Calu3 (cell line): ENCODE measurements at regions of chr19 and their contacts with region 1.

Region 1: DNA sequence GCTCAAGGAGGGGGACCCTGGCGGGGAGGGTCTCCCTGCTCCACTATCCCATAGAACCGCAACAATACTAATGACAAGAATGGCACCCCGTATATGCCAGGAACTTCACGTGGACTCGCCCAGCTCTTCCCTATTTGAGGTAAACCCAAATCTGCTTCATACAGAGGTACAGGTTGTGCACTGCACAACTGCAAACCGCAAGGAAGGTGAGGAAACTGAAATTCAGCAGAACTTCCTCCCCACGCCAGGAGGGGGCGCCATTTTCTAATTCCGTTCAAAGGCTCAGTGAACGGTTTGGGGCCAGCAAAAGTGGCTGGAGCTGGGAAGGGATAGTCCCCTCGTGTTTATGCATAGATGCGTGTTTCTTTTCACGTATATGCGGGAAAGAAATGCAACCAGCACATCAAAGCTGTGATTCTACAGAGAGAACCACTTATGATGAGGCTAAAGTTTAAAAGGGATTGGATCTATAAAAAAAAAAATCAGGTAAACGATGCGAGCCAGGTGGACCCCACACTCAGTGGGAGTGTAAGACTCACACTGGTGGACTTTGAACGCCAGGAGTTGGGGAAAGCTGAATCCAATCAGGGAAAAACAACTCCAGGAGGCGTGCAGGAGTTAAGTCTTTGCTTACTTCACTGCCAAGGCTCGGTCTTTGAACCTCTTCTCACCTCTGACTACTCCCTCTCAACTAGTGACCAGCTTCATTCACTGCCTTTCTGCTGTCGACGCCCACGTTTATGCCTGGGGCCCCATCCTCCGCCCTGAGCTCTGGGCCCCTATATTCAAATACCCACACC is 20.3 kb downstream of the C19orf81 start:
- DNase-seq: peak; percentile 45
- H3K4me3 Mint-ChIP-seq: no peak overlapping the region
- H3K27ac Mint-ChIP-seq: no peak overlapping the region
- H3K4me1 Mint-ChIP-seq: no peaks in the 10 kb centered on the region
- H3K27me3 Mint-ChIP-seq: peaks cover 55% of the 10 kb centered on the region
- CTCF ChIP-seq: peak; percentile 85

Region 2: DNA sequence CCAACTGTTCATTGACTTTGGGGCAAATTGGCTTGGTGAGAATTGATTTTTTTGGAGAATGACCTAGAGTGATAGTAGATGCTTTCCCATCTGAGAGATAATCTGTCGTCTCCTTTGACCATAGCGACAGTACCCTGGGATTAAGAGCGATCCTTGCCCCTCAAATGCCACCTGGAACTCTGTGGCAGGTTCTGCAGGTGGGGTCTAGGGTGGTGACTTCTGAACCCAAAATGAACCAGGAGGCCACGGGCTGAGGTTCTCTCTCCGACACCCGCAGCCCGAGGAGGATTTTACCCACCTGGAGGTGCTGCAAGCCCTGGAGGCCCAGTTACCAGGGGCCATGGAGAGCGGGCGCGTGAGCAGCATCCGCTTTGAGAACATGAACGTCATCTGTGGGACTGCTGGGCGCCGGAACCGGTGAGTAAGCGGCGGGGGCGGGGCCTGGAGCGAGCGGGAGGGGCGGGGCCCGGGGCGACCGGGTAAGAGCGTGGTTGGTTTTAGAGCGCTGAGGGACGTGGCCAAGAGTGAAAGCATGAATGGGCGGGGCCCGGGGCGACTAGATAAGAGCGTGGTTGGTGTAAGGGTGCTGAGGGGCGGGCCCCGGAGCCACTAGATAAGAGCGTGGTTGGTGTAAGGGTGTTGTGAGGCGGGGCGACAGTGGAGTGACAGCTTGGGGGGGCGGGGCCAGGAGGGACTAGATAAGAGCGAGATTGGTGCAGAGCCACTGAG is 11.6 kb before region 1 on chr19:
- CTCF ChIA-PET with region 1: interaction called, 10 read pairs
- intact Hi-C with region 1: no loop called
- DNase-seq: peak; percentile 85
- H3K4me3 Mint-ChIP-seq: peak overlapping the region; percentile 57
- H3K27ac Mint-ChIP-seq: no peak overlapping the region
- H3K4me1 Mint-ChIP-seq: peaks cover 8% of the 10 kb centered on the region
- H3K27me3 Mint-ChIP-seq: peaks cover 72% of the 10 kb centered on the region
- CTCF ChIP-seq: no peak

Region 3: DNA sequence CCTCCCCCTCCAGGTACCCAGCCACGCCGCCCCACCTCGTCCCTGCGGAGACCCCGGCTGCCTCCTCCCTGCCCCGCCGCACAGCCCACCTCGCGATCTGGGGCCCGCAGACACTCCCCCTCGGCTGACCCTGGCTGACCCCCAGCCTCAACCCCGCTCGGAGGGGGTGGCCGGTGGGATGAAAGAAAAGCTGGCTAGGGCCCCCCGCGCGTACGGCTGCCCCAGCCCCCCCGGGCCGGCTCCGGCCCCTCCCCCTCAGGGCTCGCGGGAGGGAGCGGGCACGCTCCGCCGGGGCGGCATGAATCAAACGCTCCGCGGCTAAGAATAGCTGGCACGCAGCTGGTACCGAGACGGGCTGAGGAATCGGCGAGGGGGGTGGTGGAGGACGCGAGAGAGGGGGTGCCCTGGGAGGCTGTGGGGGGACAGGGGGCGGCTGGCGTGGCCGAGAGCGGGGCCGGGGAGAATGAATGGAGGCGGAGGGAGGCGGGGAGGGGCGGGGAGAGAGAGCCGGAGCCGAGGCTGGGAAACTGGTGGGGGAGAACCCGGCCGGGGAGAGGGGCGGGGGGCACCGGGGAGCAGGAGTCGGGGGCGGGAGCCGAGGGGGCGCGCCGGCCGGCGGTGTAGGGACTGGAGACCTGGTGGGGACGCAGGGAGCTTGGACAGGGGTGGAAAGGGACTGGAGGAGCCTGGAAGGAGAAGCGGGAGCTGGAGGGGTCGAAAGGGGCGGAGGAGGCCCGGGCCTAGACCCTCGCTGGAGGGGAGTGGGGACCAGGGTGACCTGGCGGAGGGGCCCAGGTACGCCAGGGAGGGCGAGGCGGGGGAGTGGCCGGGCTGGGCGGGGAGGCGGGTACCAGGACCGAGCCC is 49.0 kb after region 1 on chr19:
- CTCF ChIA-PET with region 1: no interaction called
- intact Hi-C with region 1: no loop called
- DNase-seq: no peak
- H3K4me3 Mint-ChIP-seq: no peak overlapping the region
- H3K27ac Mint-ChIP-seq: no peak overlapping the region
- H3K4me1 Mint-ChIP-seq: no peaks in the 10 kb centered on the region
- H3K27me3 Mint-ChIP-seq: peaks cover 100% of the 10 kb centered on the region
- CTCF ChIP-seq: no peak

Region 4: DNA sequence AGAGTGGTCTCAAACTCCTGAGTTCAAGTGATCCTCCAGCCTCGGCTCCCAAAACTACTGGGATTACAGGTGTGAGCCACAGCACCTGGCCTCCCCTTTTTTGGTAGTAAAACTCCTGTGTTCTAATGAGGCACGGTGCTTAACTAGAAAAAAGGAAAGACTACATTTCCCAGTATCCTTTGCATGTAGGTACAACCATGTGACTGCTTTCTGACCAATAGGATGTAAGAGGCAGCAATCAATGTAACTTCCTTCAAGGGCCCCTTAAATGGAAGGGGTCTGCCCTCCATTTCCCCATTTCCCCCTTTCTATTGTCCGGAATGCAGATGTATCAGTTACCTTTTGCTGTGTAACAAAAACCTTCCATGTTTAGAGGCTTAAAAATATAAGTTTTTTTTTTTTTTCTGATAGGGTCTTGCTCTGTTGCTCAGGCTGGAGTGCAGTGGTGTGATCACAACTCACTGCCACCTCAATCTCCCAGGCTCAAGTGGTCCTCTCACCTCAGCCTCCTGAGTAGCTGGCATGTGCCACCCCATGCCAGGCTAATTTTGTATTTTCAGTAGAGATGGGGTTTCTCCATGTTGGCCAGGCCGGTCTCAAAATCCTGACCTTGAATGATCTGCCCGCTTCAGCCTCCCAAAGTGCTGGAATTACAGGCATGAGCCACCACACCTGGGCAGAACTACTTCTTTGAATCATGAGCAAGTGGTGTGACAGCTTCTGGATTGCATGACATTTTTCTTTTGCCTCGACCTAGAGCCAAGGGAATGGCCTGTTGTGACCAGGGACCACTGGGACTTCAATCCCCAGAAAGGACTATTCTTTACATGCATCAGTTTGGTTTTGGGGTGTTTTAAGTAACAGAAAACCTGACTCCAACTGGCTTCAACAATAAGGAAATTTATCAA is 103.2 kb after region 1 on chr19:
- CTCF ChIA-PET with region 1: no interaction called
- intact Hi-C with region 1: no loop called
- DNase-seq: no peak
- H3K4me3 Mint-ChIP-seq: no peak overlapping the region
- H3K27ac Mint-ChIP-seq: no peak overlapping the region
- H3K4me1 Mint-ChIP-seq: peaks cover 9% of the 10 kb centered on the region
- H3K27me3 Mint-ChIP-seq: peaks cover 63% of the 10 kb centered on the region
- CTCF ChIP-seq: no peak